Activated T-helper 1 cell treated with anti-CD3 and anti-CD28 coated beads, Interleukin-12 subunit alpha, Interleukin-12 subunit beta, Interleukin-2, Interleukin-4 antibody, amounts not matched to agents 30 ng/mL and 10 ng/mL and 1 ng/mL, durations not matched to agents 14 hours and 24 hours and 36 hours (primary cell): ENCODE measurements at regions of chr2 and their contacts with region 1.

Region 1: DNA sequence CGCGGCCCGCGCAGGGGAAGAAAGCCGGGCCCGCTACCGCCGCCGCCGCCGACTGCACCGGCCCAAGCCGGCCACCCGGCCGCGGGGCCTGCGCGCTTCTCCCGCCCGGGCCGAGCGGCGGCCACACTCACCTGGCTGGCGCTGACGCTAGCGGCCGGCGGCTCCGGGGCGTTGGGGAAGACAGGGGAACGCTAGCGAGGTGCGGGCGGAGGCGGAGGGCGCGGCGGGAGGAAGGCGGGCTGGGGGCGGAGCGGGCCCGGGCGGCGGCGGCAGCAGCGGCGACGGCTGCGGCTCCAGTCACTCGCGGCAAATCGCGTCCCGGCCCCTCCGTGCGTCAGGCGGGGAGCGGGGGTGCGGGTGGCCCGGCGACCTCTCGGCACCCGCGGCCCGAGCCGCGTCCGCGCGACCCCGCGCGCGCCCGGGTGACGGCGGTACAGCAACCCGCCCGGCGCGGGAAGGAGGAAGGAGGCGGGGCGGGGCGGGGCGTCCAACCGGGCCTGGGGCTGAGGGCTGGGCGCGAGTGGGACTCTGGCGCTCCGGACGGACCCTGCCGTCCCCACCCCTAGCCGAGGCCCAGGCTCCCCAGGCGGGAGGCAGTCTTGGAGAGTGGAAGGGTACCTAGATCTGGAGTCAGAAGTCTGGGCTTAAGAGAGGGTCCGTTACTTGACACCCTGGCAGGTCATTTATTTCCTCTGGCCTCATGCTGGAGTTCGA is at the start of gene SESTD1:
- DNase-seq: peak; percentile 62
- H3K4me3 Mint-ChIP-seq: peak within 1 kb of the TSS; percentile 87
- H3K27ac Mint-ChIP-seq: peak within 1 kb of the TSS; percentile 79
- H3K4me1 Mint-ChIP-seq: peaks cover 34% of the 10 kb centered on the region
- H3K27me3 Mint-ChIP-seq: peaks cover 41% of the 10 kb centered on the region
- total RNA-seq, gene SESTD1: 9.6 and 12.4 TPM in 2 replicates

Region 2: GRCh38 chr2:178514664-178515063 is 749.9 kb before region 1 on chr2:
- intact Hi-C with region 1: loop called (anchors 10 kb)
- DNase-seq: peak; percentile 17
- H3K4me3 Mint-ChIP-seq: peak overlapping the region; percentile 30
- H3K27ac Mint-ChIP-seq: peak overlapping the region; percentile 82
- H3K4me1 Mint-ChIP-seq: peaks cover 27% of the 10 kb centered on the region
- H3K27me3 Mint-ChIP-seq: no peaks in the 10 kb centered on the region

Region 3: DNA sequence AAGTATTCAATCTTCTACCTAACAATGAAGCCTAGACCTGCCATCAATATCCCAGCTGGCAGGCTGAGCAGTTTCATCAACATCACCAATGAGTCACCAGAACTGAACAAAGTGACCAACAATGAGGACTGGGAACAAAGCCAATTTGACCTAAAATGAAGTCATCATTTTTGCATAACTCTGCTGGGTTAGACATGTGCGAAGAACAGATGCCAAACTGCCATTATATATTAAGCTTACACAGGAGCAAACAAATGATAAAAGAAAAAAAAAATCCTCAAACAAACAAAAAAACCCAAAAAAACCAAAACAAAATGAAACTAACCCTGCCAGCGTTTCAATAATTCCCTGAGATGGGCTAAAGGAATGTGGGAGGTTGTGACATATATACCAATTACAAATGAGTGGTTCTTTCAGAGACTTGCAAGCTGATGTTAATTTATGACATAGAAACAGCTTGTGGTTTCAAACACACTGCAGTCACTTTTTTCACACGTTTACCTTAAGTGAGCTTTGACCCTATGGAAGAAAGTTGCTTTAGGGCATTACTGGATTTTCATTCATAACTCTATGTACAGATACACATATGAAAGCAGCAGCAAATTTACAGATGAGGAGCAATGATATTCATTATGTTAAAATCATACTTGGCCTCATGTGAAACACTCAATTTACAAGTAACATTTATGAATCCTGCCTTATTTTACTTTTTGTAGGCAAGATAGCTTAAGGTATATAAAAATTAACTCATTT is 157.7 kb before region 1 on chr2:
- intact Hi-C with region 1: loop called (anchors 10 kb)
- DNase-seq: no peak
- H3K4me3 Mint-ChIP-seq: peak overlapping the region; percentile 32
- H3K27ac Mint-ChIP-seq: peak overlapping the region; percentile 29
- H3K4me1 Mint-ChIP-seq: peaks cover 46% of the 10 kb centered on the region
- H3K27me3 Mint-ChIP-seq: no peaks in the 10 kb centered on the region

Region 4: GRCh38 chr2:179218848-179219594 is 45.5 kb before region 1 on chr2:
- intact Hi-C with region 1: loop called (anchors 5 kb)
- DNase-seq: peak; percentile 21
- H3K4me3 Mint-ChIP-seq: no peak overlapping the region
- H3K27ac Mint-ChIP-seq: no peak overlapping the region
- H3K4me1 Mint-ChIP-seq: no peaks in the 10 kb centered on the region
- H3K27me3 Mint-ChIP-seq: no peaks in the 10 kb centered on the region

Region 5: GRCh38 chr2:179239195-179239594 is 25.3 kb before region 1 on chr2:
- intact Hi-C with region 1: loop called (anchors 1 kb)
- DNase-seq: no peak
- H3K4me3 Mint-ChIP-seq: no peak overlapping the region
- H3K27ac Mint-ChIP-seq: no peak overlapping the region
- H3K4me1 Mint-ChIP-seq: peaks cover 64% of the 10 kb centered on the region
- H3K27me3 Mint-ChIP-seq: peaks cover 2% of the 10 kb centered on the region

Region 6: GRCh38 chr2:179253226-179253625 is 11.3 kb before region 1 on chr2:
- intact Hi-C with region 1: loop called (anchors 1 kb)
- DNase-seq: no peak
- H3K4me3 Mint-ChIP-seq: peak overlapping the region; percentile 12
- H3K27ac Mint-ChIP-seq: peak overlapping the region; percentile 73
- H3K4me1 Mint-ChIP-seq: peaks cover 61% of the 10 kb centered on the region
- H3K27me3 Mint-ChIP-seq: no peaks in the 10 kb centered on the region